WTC11 (cell line): ENCODE measurements at regions of chr10 and their contacts with region 1.

Region 1: GRCh38 chr10:49538381-49539319 is at the start of gene ERCC6:
- DNase-seq: peak; percentile 97
- ATAC-seq: peak; percentile 93
- H3K4me3 Mint-ChIP-seq: peak within 1 kb of the TSS; percentile 86
- H3K27ac Mint-ChIP-seq: peak within 1 kb of the TSS; percentile 81; the same call in 1 of the 2 replicates
- H3K4me1 Mint-ChIP-seq: peaks cover 36% of the 10 kb centered on the region
- H3K27me3 Mint-ChIP-seq: peaks cover 36% of the 10 kb centered on the region
- CTCF ChIP-seq: no peak
- total RNA-seq, gene ERCC6: 10.9 to 14.5 TPM (median 14.3 TPM) in 3 replicates

Region 2: DNA sequence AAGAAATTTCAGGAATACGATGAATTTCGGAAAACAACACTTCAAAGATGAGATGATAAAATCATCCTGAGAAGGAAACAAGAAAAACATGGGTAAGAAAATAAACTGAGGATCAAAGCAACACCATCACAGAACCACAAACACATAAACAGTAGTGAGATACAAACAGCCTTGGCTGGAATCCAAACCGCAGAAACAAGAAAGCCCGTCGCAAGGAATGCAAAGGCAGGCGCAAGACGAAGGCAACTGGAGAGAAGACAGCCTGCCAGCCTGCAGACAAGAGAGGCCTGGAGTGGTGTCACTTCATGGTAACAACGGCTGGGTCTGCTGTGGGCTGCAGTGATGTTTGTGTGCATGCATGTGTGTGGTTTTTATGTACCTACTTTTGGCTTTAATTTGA is 81.0 kb before region 1 on chr10:
- CTCF ChIA-PET with region 1: no interaction called
- POLR2A ChIA-PET with region 1: no interaction called
- DNase-seq: no peak
- ATAC-seq: no peak
- H3K4me3 Mint-ChIP-seq: no peak overlapping the region
- H3K27ac Mint-ChIP-seq: no peak overlapping the region
- H3K4me1 Mint-ChIP-seq: no peaks in the 10 kb centered on the region
- H3K27me3 Mint-ChIP-seq: no peaks in the 10 kb centered on the region
- CTCF ChIP-seq: no peak

Region 3: GRCh38 chr10:49500418-49500817 is 38.2 kb before region 1 on chr10:
- CTCF ChIA-PET with region 1: no interaction called
- POLR2A ChIA-PET with region 1: no interaction called
- DNase-seq: no peak
- ATAC-seq: peak; percentile 18; the same call in 1 of the 2 replicates
- H3K4me3 Mint-ChIP-seq: no peak overlapping the region
- H3K27ac Mint-ChIP-seq: no peak overlapping the region
- H3K4me1 Mint-ChIP-seq: peaks cover 13% of the 10 kb centered on the region
- H3K27me3 Mint-ChIP-seq: no peaks in the 10 kb centered on the region
- CTCF ChIP-seq: no peak

Region 4: GRCh38 chr10:49518982-49519578 is 19.6 kb before region 1 on chr10:
- CTCF ChIA-PET with region 1: interaction called, 12 read pairs
- POLR2A ChIA-PET with region 1: no interaction called
- DNase-seq: peak; percentile 24
- ATAC-seq: peak; percentile 80
- H3K4me3 Mint-ChIP-seq: no peak overlapping the region
- H3K27ac Mint-ChIP-seq: no peak overlapping the region
- H3K4me1 Mint-ChIP-seq: peaks cover 22% of the 10 kb centered on the region
- H3K27me3 Mint-ChIP-seq: no peaks in the 10 kb centered on the region
- CTCF ChIP-seq: peak; percentile 64